Gastrocnemius medialis (tissue), 4 donors: ENCODE measurements at regions of chr7 and their contacts with region 1.

Region 1: GRCh38 chr7:4883374-4884144 is at the start of gene RADIL:
- DNase-seq: peak; percentile 75 to 88
- ATAC-seq: peak; percentile 72 to 85
- H3K4me3 ChIP-seq: peak within 1 kb of the TSS; percentile 51 to 66 (median 53)
- H3K27ac ChIP-seq: peak within 1 kb of the TSS; percentile 69 to 80 (median 74)
- H3K4me1 ChIP-seq: peaks cover 0 to 4% of the 10 kb centered on the region in 2 donors
- H3K27me3 ChIP-seq: peaks cover 0 to 10% (median 4%) of the 10 kb centered on the region in 3 donors
- CTCF ChIP-seq: peak; percentile 34 to 82 (median 69)
- POLR2A ChIP-seq: peak in 1 of 2 donors; percentile 15
- total RNA-seq, gene RADIL: 2.1 to 12.1 (median 5.0) TPM

Region 2: GRCh38 chr7:4797858-4798705 is 85.5 kb before region 1 on chr7:
- in situ Hi-C with region 1: loop called in 1 of 4 experiments (anchors 10 kb)
- intact Hi-C with region 1: no loop called
- DNase-seq: no peak
- ATAC-seq: peak; percentile 62 to 73
- H3K4me3 ChIP-seq: no peak overlapping the region
- H3K27ac ChIP-seq: no peak overlapping the region
- H3K4me1 ChIP-seq: peaks cover 0 to 9% of the 10 kb centered on the region in 2 donors
- H3K27me3 ChIP-seq: no peaks in the 10 kb centered on the region
- CTCF ChIP-seq: peak; percentile 54 to 88 (median 83)
- POLR2A ChIP-seq: no peak

Region 3: DNA sequence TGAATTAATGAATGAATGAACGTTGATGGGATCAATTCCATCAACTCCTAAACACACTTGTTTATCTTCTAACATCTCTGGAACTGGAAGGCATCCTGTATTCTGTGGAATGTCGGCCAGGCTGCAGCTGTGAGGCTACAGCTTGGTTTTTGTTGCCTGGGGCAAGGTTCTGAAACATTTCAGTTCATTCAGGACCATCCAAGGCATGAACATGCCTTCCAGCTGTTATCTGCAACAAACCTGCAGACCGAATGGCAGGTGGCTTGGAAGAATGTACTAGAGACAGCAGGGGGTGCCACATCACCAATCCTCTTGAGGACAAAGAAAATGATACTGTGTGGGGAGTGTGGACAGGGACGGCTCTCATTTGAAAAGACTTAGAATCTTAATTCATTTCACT is 34.2 kb before region 1 on chr7:
- in situ Hi-C with region 1: no loop called
- intact Hi-C with region 1: loop called (anchors 2 kb)
- DNase-seq: no peak
- ATAC-seq: no peak
- H3K4me3 ChIP-seq: no peak overlapping the region
- H3K27ac ChIP-seq: no peak overlapping the region
- H3K4me1 ChIP-seq: no peaks in the 10 kb centered on the region
- H3K27me3 ChIP-seq: no peaks in the 10 kb centered on the region
- CTCF ChIP-seq: peak in 1 of 5 experiments; percentile 11
- POLR2A ChIP-seq: no peak